Natural killer cell (primary cell): ENCODE measurements at regions of chr3 and their contacts with region 1.

Region 1: DNA sequence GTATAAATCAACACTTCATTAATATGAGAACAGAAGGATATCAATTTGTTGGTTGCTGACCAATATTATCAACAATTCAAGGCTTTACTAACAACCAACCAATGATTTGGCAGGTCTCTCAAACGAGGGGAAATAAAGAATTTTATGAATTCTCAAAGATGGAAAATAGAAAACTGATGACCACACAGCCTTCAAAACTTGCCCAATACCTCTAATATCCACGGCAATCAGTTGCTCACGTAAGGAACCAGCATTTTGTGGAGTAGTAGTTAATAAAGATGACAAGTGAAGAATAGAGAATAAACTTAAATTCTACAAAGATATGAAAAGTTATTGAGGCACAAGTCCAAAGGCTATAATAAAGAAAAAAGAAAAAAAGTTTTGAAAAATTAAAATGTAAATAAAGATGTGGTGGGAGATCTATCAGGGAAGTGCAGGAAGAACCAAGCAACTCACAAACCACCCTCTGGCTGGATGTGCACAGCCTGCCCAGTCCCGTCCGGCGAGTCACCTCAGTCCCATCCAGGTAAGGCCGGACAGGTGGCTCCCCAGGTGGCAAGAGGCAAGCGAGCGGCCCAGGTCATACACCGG is 808 bp downstream of the GK5 start:
- DNase-seq: no peak
- ATAC-seq: no peak
- H3K4me3 ChIP-seq: peak overlapping the region; percentile 86
- H3K4me3 Mint-ChIP-seq: peak overlapping the region; percentile 96
- H3K27ac ChIP-seq: peak overlapping the region; percentile 86
- H3K27ac Mint-ChIP-seq: peak overlapping the region; percentile 93 to 96
- H3K4me1 ChIP-seq: peaks cover 22% of the 10 kb centered on the region
- H3K4me1 Mint-ChIP-seq: peaks cover 41 to 43% of the 10 kb centered on the region in 2 donors
- H3K27me3 ChIP-seq: no peaks in the 10 kb centered on the region
- H3K27me3 Mint-ChIP-seq: no peaks in the 10 kb centered on the region
- CTCF ChIP-seq: no peak

Region 2: GRCh38 chr3:142098964-142099363 is 125.6 kb before region 1 on chr3:
- intact Hi-C with region 1: no loop called
- DNase-seq: no peak
- ATAC-seq: no peak
- H3K4me3 ChIP-seq: no peak overlapping the region
- H3K4me3 Mint-ChIP-seq: no peak overlapping the region
- H3K27ac ChIP-seq: no peak overlapping the region
- H3K27ac Mint-ChIP-seq: no peak overlapping the region
- H3K4me1 ChIP-seq: no peaks in the 10 kb centered on the region
- H3K4me1 Mint-ChIP-seq: peaks cover 23 to 32% of the 10 kb centered on the region in 2 donors
- H3K27me3 ChIP-seq: no peaks in the 10 kb centered on the region
- H3K27me3 Mint-ChIP-seq: no peaks in the 10 kb centered on the region
- CTCF ChIP-seq: no peak

Region 3: DNA sequence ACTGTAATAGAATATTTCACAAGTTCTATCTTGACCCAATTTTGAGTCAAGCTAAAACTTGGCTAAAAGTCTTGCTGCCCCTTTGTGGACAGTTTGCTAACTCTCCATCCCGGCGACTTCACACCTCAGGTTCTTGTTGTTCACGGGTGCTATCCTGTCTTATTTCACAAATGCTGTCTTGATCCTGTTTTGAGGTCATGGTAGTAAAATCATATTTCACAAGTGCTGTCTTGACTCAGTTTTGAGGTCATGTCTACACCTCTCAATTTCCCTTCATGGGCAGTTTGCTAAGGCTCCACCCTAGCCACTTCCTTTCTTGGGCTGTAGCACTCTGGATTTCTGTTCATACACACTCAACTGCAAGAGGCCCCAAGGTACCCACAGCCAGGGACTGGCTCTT is 45.8 kb after region 1 on chr3:
- intact Hi-C with region 1: loop called (anchors 2 kb)
- DNase-seq: peak; percentile 56 to 74
- ATAC-seq: peak; percentile 78 to 90 (median 86)
- H3K4me3 ChIP-seq: no peak overlapping the region
- H3K4me3 Mint-ChIP-seq: peak overlapping the region; percentile 38
- H3K27ac ChIP-seq: peak overlapping the region; percentile 83
- H3K27ac Mint-ChIP-seq: peak overlapping the region; percentile 83 to 87
- H3K4me1 ChIP-seq: peaks cover 39% of the 10 kb centered on the region
- H3K4me1 Mint-ChIP-seq: peaks cover 64 to 87% of the 10 kb centered on the region in 2 donors
- H3K27me3 ChIP-seq: no peaks in the 10 kb centered on the region
- H3K27me3 Mint-ChIP-seq: no peaks in the 10 kb centered on the region
- CTCF ChIP-seq: no peak

Region 4: DNA sequence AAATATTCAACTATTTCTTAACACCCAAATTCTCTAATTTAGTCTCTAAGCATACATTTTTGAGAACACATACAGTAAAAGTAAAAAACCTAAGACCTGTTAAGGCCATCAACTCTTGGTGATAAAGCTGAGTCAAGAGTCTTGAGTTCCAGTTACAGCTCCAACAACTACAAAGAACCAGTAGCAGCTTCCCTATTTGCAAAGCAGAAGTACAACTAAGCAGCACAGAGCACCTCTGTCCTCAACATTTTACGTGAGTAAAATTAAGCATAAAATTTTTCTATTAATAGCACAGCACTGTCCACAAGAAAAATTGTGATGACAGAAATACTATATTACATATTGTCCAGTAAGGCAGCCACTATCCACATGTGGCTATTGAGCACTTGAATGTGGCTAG is 660.0 kb after region 1 on chr3:
- intact Hi-C with region 1: no loop called
- DNase-seq: no peak
- ATAC-seq: no peak
- H3K4me3 ChIP-seq: no peak overlapping the region
- H3K4me3 Mint-ChIP-seq: no peak overlapping the region
- H3K27ac ChIP-seq: no peak overlapping the region
- H3K27ac Mint-ChIP-seq: no peak overlapping the region
- H3K4me1 ChIP-seq: peaks cover 4% of the 10 kb centered on the region
- H3K4me1 Mint-ChIP-seq: peaks cover 6 to 10% of the 10 kb centered on the region in 2 donors
- H3K27me3 ChIP-seq: peaks cover 19% of the 10 kb centered on the region
- H3K27me3 Mint-ChIP-seq: peaks cover 23 to 46% of the 10 kb centered on the region in 2 donors
- CTCF ChIP-seq: no peak